Endothelial cell of umbilical vein (primary cell): ENCODE measurements at regions of chr1 and their contacts with region 1.

Region 1: DNA sequence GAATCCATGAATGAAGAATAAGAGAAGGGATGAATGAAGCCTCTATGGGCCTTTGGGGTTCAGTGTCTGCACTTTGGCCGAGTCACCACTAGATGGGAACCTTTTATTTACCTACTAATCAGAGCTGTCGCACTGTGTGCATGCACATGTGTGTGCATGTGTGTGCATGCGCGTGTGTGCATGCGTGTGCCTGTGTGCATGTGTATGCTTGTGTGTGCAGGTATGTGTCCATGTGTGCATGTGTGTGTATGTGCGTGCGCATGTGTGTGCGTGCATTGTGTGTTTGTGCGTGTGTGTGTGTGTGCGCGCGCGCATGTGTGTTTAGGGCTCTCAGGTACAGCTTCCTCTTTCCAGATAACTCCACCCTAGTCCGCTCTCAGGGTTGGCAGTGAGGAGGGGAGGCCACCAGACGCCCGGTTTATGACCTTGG is 20.4 kb upstream of the UBXN10 start:
- DNase-seq: no peak
- H3K4me3 ChIP-seq: no peak overlapping the region
- H3K27ac ChIP-seq: no peak overlapping the region
- H3K4me1 ChIP-seq: no peaks in the 10 kb centered on the region
- H3K27me3 ChIP-seq: no peaks in the 10 kb centered on the region
- CTCF ChIP-seq: peak in 1 of 2 donors; percentile 11
- POLR2A ChIP-seq: no peak

Region 2: GRCh38 chr1:19974822-19975416 is 190.6 kb before region 1 on chr1:
- CTCF ChIA-PET with region 1: interaction called, 10 read pairs
- POLR2A ChIA-PET with region 1: no interaction called
- dilution Hi-C with region 1: no loop called
- intact Hi-C with region 1: no loop called
- DNase-seq: peak; percentile 69
- H3K4me3 ChIP-seq: no peak overlapping the region
- H3K27ac ChIP-seq: no peak overlapping the region
- H3K4me1 ChIP-seq: no peaks in the 10 kb centered on the region
- H3K27me3 ChIP-seq: peaks cover 0 to 2% of the 10 kb centered on the region in 2 experiments
- CTCF ChIP-seq: peak; percentile 64 to 69
- POLR2A ChIP-seq: no peak